Left ventricle myocardium inferior (tissue), 1 donor: ENCODE measurements at regions of chr3 and their contacts with region 1.

Region 1: DNA sequence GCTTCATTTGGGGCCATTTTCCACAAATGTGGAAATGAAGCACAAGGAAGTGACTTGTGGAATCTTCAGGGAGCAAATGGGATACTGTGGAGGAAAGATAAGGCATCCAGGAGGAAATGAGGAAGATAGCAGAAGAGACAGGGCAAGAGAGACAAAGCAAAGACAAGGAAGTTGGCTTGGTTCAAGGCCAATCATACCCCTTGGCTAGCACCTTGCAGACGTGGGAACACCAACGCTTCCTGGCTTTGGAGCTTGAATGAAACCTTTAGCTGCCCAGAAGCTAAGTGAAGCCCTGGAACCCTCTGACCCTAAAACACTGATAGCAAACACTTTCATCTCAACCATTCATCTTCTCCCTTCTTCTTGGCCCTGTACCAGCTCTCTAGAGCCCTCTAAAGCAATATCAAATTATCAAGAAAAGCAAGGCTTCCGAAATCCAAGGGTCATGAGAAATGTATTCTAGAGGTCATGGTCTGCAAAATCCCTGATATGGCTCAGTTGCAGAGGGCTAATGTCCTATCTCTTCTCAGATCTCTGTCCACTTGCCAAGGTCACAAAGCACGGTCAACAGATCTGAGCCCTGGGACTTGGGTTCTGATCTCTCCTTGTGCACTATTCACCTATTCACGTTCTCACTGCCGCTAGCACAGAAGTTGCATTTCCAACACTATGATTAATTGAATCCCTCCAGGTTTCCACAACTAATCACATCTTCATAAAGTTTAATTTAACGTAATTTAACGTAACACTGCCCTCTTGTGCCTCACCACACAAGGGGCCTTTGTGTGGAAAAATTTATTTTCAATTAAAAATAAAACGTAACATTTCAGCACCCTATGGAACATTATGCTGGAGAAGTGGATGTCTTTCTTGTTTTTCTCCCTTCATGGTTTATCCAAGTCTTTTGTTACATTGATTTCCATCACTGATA is 557.6 kb upstream of the ADAMTS9 start:
- DNase-seq: no peak
- H3K4me3 ChIP-seq: no peak overlapping the region
- H3K27ac ChIP-seq: no peak overlapping the region
- H3K4me1 ChIP-seq: peaks cover 7% of the 10 kb centered on the region
- H3K27me3 ChIP-seq: no peaks in the 10 kb centered on the region
- CTCF ChIP-seq: peak; percentile 59

Region 2: GRCh38 chr3:64685800-64686445 is 559.5 kb before region 1 on chr3:
- intact Hi-C with region 1: loop called (anchors 5 kb)
- DNase-seq: peak; percentile 93
- H3K4me3 ChIP-seq: peak overlapping the region; percentile 78
- H3K27ac ChIP-seq: peak overlapping the region; percentile 97
- H3K4me1 ChIP-seq: peaks cover 77% of the 10 kb centered on the region
- H3K27me3 ChIP-seq: no peaks in the 10 kb centered on the region
- CTCF ChIP-seq: peak; percentile 68

Region 3: DNA sequence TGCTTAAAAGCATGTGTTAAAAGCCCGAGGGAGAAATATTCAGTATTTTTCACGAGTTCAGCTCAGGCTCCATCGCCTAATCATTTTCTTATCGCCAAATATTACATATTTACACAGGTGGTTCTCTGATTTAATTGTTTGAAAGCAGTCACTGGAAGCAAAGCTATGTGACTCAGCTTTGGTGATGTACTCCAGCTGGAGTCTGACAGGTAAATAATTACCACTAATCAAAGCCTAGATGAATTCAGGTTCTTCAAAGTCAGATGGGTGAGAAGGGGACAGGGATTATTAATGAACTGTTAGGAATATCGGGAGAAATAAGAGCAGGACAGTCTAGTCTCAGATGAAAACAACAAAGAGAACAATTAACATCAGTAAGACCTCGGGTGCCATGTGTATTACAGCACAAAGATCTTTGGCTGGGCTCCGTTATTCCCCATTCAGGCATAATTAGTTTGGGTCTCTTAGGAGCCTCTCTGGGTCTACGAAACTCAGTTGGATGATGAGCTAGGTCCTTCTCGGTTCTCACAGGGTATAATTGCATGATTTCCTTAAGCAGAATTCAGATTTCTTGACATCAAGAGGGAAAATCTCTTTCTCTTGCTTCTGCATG is 225.8 kb before region 1 on chr3:
- intact Hi-C with region 1: no loop called
- DNase-seq: no peak
- H3K4me3 ChIP-seq: no peak overlapping the region
- H3K27ac ChIP-seq: peak overlapping the region; percentile 20
- H3K4me1 ChIP-seq: peaks cover 17% of the 10 kb centered on the region
- H3K27me3 ChIP-seq: no peaks in the 10 kb centered on the region
- CTCF ChIP-seq: no peak